Posterior vena cava (tissue), 2 donors: ENCODE measurements at regions of chr12 and their contacts with region 1.

Region 1: GRCh38 chr12:109785854-109786253 is 47.3 kb downstream of the TRPV4 start:
- DNase-seq: no peak

Region 2: DNA sequence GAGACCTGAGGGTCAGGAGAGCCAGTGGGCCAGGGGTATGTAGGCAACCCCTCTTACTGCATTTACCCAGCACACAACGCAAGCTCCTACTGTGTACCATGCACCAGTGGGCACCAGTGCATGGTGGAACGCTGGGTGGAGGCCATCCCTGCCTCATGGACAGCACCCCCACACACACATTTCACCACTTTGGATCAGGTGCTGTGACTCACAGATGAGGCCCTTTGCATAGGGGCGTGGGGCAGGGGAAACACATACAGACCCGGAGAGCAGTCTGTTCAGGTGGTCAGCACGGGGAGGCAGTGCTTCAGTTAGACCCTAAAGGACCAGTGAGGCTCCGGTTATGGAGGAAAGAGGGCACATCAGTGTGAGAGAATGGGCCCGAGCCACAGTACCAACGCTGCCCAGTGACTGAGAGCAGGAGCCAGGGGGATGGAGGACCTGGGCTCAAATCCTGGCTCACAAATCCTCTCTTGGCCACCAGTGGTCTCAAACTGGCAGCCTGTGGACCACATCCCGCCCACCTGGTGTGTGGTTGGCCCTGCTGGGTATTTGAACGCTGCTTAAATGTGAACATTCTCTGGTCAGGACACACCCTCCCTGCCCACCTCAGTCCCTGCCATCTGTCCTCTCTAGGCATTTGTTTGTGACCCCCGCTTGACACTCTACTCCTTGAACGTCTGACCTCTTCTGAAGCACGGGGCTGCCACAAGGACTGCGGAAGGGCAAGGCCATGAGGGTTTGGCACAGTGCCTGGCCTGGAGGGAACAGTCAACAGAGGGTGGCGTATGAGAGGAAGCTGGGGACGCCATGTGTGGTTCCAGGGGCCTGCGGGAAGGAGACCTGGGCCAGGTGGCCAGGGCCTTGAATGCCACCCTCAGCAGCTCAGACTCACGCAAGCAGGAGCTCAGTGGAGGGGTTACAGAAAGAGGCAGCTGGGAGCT is 25.6 kb before region 1 on chr12:
- intact Hi-C with region 1: no loop called
- DNase-seq: peak; percentile 80

Region 3: GRCh38 chr12:109824731-109825130 is 38.9 kb after region 1 on chr12:
- intact Hi-C with region 1: loop called in 1 of 2 experiments (anchors 1 kb)
- DNase-seq: no peak

Region 4: GRCh38 chr12:110501752-110502738 is 716.2 kb after region 1 on chr12 and contains the starts of genes RAD9B and VPS29:
- intact Hi-C with region 1: no loop called
- DNase-seq: peak; percentile 99
- total RNA-seq, gene RAD9B: 1.3 to 3.0 TPM
- total RNA-seq, gene VPS29: 131 to 175 TPM